Dorsolateral prefrontal cortex (tissue), 120 donors: ENCODE measurements at regions of chr7 and their contacts with region 1.

Region 1: DNA sequence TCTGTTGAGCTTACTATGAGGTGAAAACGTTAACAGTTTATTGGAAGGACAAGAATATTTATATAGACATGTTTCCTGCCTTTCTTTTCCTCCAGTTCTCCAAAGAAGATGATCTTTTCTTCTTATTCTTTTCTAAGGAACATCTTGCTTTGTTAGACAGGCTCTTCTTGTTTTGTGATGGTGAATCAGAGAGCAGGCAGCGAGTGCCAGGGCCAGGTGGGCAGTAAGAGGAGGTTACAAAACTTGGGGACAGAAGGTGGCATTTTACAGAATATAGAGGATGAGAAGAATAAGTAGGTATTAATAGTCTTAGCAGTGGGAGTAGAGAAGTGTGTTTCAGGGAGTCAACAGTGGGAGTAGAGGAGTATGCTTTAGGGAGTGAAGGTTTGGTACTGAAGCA is 223.6 kb downstream of the ARL4A start:
- DNase-seq: peak in 4 of 10 donors; percentile 6 to 61 (median 40)
- H3K4me3 ChIP-seq: no peak overlapping the region
- H3K27ac ChIP-seq: peak overlapping the region in 15 of 59 donors; percentile 1 to 66 (median 37)
- H3K27me3 ChIP-seq: no peaks in the 10 kb centered on the region
- CTCF ChIP-seq: no peak

Region 2: GRCh38 chr7:12884856-12885440 is 26.1 kb before region 1 on chr7:
- intact Hi-C with region 1: loop called in 1 of 2 experiments (anchors 2 kb)
- DNase-seq: no peak
- H3K4me3 ChIP-seq: no peak overlapping the region
- H3K27ac ChIP-seq: no peak overlapping the region
- H3K27me3 ChIP-seq: no peaks in the 10 kb centered on the region
- CTCF ChIP-seq: no peak

Region 3: GRCh38 chr7:12951397-12951801 is 40.3 kb after region 1 on chr7:
- intact Hi-C with region 1: loop called in 1 of 2 experiments (anchors 1 kb)
- DNase-seq: no peak
- H3K4me3 ChIP-seq: no peak overlapping the region
- H3K27ac ChIP-seq: peak overlapping the region in 14 of 59 donors; percentile 9 to 70 (median 31)
- H3K27me3 ChIP-seq: no peaks in the 10 kb centered on the region
- CTCF ChIP-seq: no peak

Region 4: GRCh38 chr7:13067036-13067435 is 156.0 kb after region 1 on chr7:
- intact Hi-C with region 1: no loop called
- DNase-seq: no peak
- H3K4me3 ChIP-seq: no peak overlapping the region
- H3K27ac ChIP-seq: no peak overlapping the region
- H3K27me3 ChIP-seq: no peaks in the 10 kb centered on the region
- CTCF ChIP-seq: no peak